GM12878 (cell line): ENCODE measurements at regions of chr7 and their contacts with region 1.

Region 1: DNA sequence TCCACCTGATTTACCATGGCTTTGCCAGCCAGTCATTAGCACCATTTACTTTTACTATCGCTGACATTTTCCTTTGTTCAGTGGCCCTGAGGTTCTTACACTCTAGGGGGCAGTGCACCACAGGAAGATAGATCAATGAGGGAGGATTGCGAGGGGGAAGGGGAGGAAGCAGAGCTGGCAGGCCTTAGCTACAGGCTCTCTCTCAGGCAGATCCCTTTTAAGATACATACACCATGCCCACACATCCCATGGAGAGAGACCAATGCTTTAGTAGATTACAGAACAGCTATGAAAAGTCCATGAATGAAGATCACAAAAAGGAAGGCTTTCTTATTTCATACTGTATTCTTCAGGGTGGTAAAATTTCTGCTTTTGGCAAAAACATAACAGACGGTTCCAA is 47.4 kb downstream of the DENND11 start:
- DNase-seq: peak; percentile 23
- ATAC-seq: peak; percentile 87
- H3K4me3 ChIP-seq: no peak overlapping the region
- H3K27ac ChIP-seq: no peak overlapping the region
- H3K4me1 ChIP-seq: peaks cover 3% of the 10 kb centered on the region
- H3K27me3 ChIP-seq: no peaks in the 10 kb centered on the region
- CTCF ChIP-seq: peak; percentile 75 to 83 (median 79)
- EP300 ChIP-seq: no peak
- POLR2A ChIP-seq: no peak
- RAD21 ChIP-seq: peak; percentile 94

Region 2: GRCh38 chr7:140810830-140811556 is 843.6 kb before region 1 on chr7:
- CTCF ChIA-PET with region 1: interaction called, 14 read pairs
- POLR2A ChIA-PET with region 1: no interaction called
- RAD21 ChIA-PET with region 1: interaction called, 6 read pairs
- SMC1A ChIA-PET with region 1: interaction called, 4 read pairs
- in situ Hi-C with region 1: no loop called
- intact Hi-C with region 1: no loop called
- DNase-seq: peak; percentile 51
- ATAC-seq: peak; percentile 100
- H3K4me3 ChIP-seq: no peak overlapping the region
- H3K27ac ChIP-seq: no peak overlapping the region
- H3K4me1 ChIP-seq: no peaks in the 10 kb centered on the region
- H3K27me3 ChIP-seq: no peaks in the 10 kb centered on the region
- CTCF ChIP-seq: peak; percentile 55 to 72 (median 70); a peak in 5 of 6 replicates
- EP300 ChIP-seq: no peak
- POLR2A ChIP-seq: no peak
- RAD21 ChIP-seq: peak; percentile 74

Region 3: GRCh38 chr7:141483044-141483443 is 171.5 kb before region 1 on chr7:
- CTCF ChIA-PET with region 1: no interaction called
- POLR2A ChIA-PET with region 1: no interaction called
- RAD21 ChIA-PET with region 1: no interaction called
- SMC1A ChIA-PET with region 1: no interaction called
- in situ Hi-C with region 1: no loop called
- intact Hi-C with region 1: no loop called
- DNase-seq: no peak
- ATAC-seq: peak; percentile 62
- H3K4me3 ChIP-seq: no peak overlapping the region
- H3K27ac ChIP-seq: no peak overlapping the region
- H3K4me1 ChIP-seq: no peaks in the 10 kb centered on the region
- H3K27me3 ChIP-seq: peaks cover 0 to 3% of the 10 kb centered on the region in 2 experiments; a peak in 2 of 4 replicates
- CTCF ChIP-seq: no peak
- EP300 ChIP-seq: no peak
- POLR2A ChIP-seq: no peak
- RAD21 ChIP-seq: no peak

Region 4: DNA sequence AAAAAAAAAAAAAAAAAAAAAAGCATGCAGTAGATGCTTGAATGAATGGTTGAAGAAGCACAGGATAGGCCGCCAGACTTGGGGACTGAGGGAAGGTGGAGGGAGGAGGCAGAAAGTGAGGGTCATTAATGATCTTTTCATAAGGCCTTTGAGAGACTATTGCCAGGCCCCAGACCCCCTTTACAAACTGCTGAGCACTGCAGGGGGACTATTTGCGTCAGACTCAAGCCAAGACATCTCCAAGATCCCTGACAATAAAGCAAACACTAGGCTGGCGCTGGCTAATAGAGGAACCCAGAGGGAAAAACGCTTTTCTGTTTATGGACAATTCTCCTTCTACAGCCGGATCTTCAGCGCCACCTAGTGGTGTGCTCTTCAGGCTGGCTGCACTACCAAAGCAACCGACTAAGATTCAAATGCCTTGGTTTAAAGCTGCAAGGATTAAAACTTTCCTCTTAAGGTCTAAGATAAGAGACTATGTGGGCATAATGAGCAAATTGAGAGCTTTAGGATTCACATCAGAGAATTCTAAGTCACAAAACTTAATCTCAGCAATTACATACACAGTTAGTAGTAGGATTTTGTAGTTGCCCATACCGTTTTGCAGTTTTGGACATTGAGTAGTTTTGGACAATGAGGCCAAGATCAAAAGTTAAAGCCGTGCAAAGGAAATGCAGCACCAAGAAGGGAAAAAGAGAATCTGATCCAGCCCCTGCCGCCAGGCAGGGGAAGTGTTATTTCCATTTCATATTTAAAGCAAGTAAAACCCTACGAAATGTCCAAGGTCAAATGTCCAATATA is 121.2 kb before region 1 on chr7:
- CTCF ChIA-PET with region 1: interaction called, 36 read pairs
- POLR2A ChIA-PET with region 1: no interaction called
- RAD21 ChIA-PET with region 1: interaction called, 10 read pairs
- SMC1A ChIA-PET with region 1: interaction called, 33 read pairs
- in situ Hi-C with region 1: no loop called
- intact Hi-C with region 1: loop called (anchors 2 kb)
- DNase-seq: no peak
- ATAC-seq: peak; percentile 89
- H3K4me3 ChIP-seq: no peak overlapping the region
- H3K27ac ChIP-seq: no peak overlapping the region
- H3K4me1 ChIP-seq: no peaks in the 10 kb centered on the region
- H3K27me3 ChIP-seq: no peaks in the 10 kb centered on the region
- CTCF ChIP-seq: peak; percentile 88 to 97 (median 95)
- EP300 ChIP-seq: no peak
- POLR2A ChIP-seq: no peak
- RAD21 ChIP-seq: peak; percentile 90

Region 5: GRCh38 chr7:141619745-141620144 is 34.8 kb before region 1 on chr7:
- CTCF ChIA-PET with region 1: interaction called, 6 read pairs
- POLR2A ChIA-PET with region 1: no interaction called
- RAD21 ChIA-PET with region 1: no interaction called
- SMC1A ChIA-PET with region 1: interaction called, 12 read pairs
- in situ Hi-C with region 1: no loop called
- intact Hi-C with region 1: no loop called
- DNase-seq: no peak
- ATAC-seq: no peak
- H3K4me3 ChIP-seq: no peak overlapping the region
- H3K27ac ChIP-seq: no peak overlapping the region
- H3K4me1 ChIP-seq: no peaks in the 10 kb centered on the region
- H3K27me3 ChIP-seq: no peaks in the 10 kb centered on the region
- CTCF ChIP-seq: no peak
- EP300 ChIP-seq: no peak
- POLR2A ChIP-seq: no peak
- RAD21 ChIP-seq: no peak

Region 6: DNA sequence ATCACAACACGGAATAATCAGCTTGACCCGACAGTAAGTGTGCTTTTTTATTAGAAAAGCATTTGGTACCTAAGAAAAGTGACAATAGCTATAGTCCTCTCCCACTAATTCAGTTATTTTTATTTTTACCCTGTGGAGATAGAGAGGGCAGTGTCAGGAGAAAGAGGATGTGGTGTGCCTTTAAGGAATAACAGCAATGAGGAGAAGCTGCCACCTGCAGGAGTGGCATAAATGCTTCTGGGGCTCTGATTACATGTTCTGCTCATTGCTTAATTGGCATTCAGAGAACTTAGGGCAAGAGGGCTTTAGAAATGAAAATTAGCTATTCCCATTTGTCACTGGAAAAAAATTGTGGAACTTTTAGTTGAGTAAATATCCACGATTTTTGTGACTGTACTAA is 12.7 kb before region 1 on chr7:
- CTCF ChIA-PET with region 1: interaction called, 15 read pairs
- POLR2A ChIA-PET with region 1: no interaction called
- RAD21 ChIA-PET with region 1: no interaction called
- SMC1A ChIA-PET with region 1: interaction called, 13 read pairs
- in situ Hi-C with region 1: no loop called
- intact Hi-C with region 1: no loop called
- DNase-seq: no peak
- ATAC-seq: no peak
- H3K4me3 ChIP-seq: no peak overlapping the region
- H3K27ac ChIP-seq: no peak overlapping the region
- H3K4me1 ChIP-seq: no peaks in the 10 kb centered on the region
- H3K27me3 ChIP-seq: no peaks in the 10 kb centered on the region
- CTCF ChIP-seq: peak in 1 of 3 experiments; percentile 20; a peak in 1 of 6 replicates
- EP300 ChIP-seq: no peak
- POLR2A ChIP-seq: no peak
- RAD21 ChIP-seq: peak; percentile 10; the same call in 1 of the 2 replicates

Region 7: DNA sequence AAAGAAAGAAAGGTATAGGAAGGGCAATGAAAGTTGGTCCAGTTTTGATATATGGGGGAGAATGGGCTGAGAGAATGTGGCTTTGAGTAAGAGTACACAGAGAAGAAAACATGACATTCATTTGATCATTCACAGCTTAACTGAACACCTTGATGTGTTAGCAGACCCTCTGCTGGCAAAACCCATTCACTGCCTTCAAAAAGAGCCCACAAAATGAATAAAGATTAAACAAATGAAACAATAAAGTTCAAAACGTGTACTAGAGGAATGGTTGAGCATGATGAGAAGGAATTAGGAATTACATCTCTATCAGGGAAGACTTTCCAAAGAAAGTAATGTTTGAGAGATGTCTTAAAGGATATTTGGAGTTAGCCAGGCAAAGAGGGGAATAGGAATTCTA is 55.8 kb after region 1 on chr7:
- CTCF ChIA-PET with region 1: interaction called, 17 read pairs
- POLR2A ChIA-PET with region 1: no interaction called
- RAD21 ChIA-PET with region 1: interaction called, 19 read pairs
- SMC1A ChIA-PET with region 1: interaction called, 8 read pairs
- in situ Hi-C with region 1: no loop called
- intact Hi-C with region 1: no loop called
- DNase-seq: no peak
- ATAC-seq: no peak
- H3K4me3 ChIP-seq: no peak overlapping the region
- H3K27ac ChIP-seq: no peak overlapping the region
- H3K4me1 ChIP-seq: no peaks in the 10 kb centered on the region
- H3K27me3 ChIP-seq: no peaks in the 10 kb centered on the region
- CTCF ChIP-seq: peak in 1 of 3 experiments; percentile 10; a peak in 2 of 6 replicates
- EP300 ChIP-seq: no peak
- POLR2A ChIP-seq: no peak
- RAD21 ChIP-seq: peak; percentile 23; the same call in 1 of the 2 replicates

Region 8: GRCh38 chr7:141737834-141738591 is 83.5 kb after region 1 on chr7 and contains the start of gene SSBP1:
- CTCF ChIA-PET with region 1: interaction called, 121 read pairs
- POLR2A ChIA-PET with region 1: interaction called, 5 read pairs
- RAD21 ChIA-PET with region 1: interaction called, 33 read pairs
- SMC1A ChIA-PET with region 1: interaction called, 35 read pairs
- in situ Hi-C with region 1: no loop called
- intact Hi-C with region 1: loop called (anchors 1 kb)
- DNase-seq: peak; percentile 92
- ATAC-seq: peak; percentile 91
- H3K4me3 ChIP-seq: peak within 1 kb of the TSS; percentile 98
- H3K27ac ChIP-seq: peak within 1 kb of the TSS; percentile 91
- H3K4me1 ChIP-seq: peaks cover 4% of the 10 kb centered on the region; the same call in 1 of the 2 replicates
- H3K27me3 ChIP-seq: no peaks in the 10 kb centered on the region
- CTCF ChIP-seq: peak; percentile 83 to 98 (median 84)
- EP300 ChIP-seq: no peak; a peak in 1 of 4 replicates
- POLR2A ChIP-seq: peak; percentile 99
- RAD21 ChIP-seq: peak; percentile 49
- polyA plus RNA-seq, gene SSBP1: 802 to 998 TPM

Region 9: GRCh38 chr7:143362131-143363015 is 1707.8 kb after region 1 on chr7 and contains the start of gene FAM131B:
- CTCF ChIA-PET with region 1: no interaction called
- POLR2A ChIA-PET with region 1: no interaction called
- RAD21 ChIA-PET with region 1: no interaction called
- SMC1A ChIA-PET with region 1: no interaction called
- in situ Hi-C with region 1: no loop called
- intact Hi-C with region 1: no loop called
- DNase-seq: no peak
- ATAC-seq: peak; percentile 21; the same call in 2 of the 3 replicates
- H3K4me3 ChIP-seq: no peak within 1 kb of the TSS
- H3K27ac ChIP-seq: no peak within 1 kb of the TSS
- H3K4me1 ChIP-seq: no peaks in the 10 kb centered on the region
- H3K27me3 ChIP-seq: peaks cover 10 to 22% of the 10 kb centered on the region in 2 experiments
- CTCF ChIP-seq: no peak
- EP300 ChIP-seq: no peak
- POLR2A ChIP-seq: no peak
- RAD21 ChIP-seq: no peak
- polyA plus RNA-seq, gene FAM131B: not detected